Activated CD4-positive, alpha-beta T cell treated with anti-CD3 and anti-CD28 coated beads for 36 hours (primary cell): ENCODE measurements at regions of chr1 and their contacts with region 1.

Region 1: GRCh38 chr1:27603681-27604578 is at the start of gene AHDC1:
- DNase-seq: peak; percentile 96
- ATAC-seq: peak; percentile 77
- H3K4me3 Mint-ChIP-seq: peak within 1 kb of the TSS; percentile 91
- H3K27ac Mint-ChIP-seq: peak within 1 kb of the TSS; percentile 70
- H3K4me1 Mint-ChIP-seq: peaks cover 36% of the 10 kb centered on the region
- H3K27me3 Mint-ChIP-seq: no peaks in the 10 kb centered on the region
- total RNA-seq, gene AHDC1: 10.3 to 12.1 TPM

Region 2: GRCh38 chr1:27321813-27322577 is 281.9 kb before region 1 on chr1 and contains the start of gene TMEM222:
- CTCF ChIA-PET with region 1: interaction called, 4 read pairs
- POLR2A ChIA-PET with region 1: no interaction called
- intact Hi-C with region 1: loop called (anchors 1 to 10 kb)
- DNase-seq: peak; percentile 99
- ATAC-seq: peak; percentile 98
- H3K4me3 Mint-ChIP-seq: peak within 1 kb of the TSS; percentile 94
- H3K27ac Mint-ChIP-seq: peak within 1 kb of the TSS; percentile 90
- H3K4me1 Mint-ChIP-seq: peaks cover 41% of the 10 kb centered on the region
- H3K27me3 Mint-ChIP-seq: no peaks in the 10 kb centered on the region
- total RNA-seq, gene TMEM222: 27.5 to 31.2 TPM

Region 3: GRCh38 chr1:27403065-27403726 is 200.7 kb before region 1 on chr1:
- CTCF ChIA-PET with region 1: interaction called, 5 read pairs
- POLR2A ChIA-PET with region 1: no interaction called
- intact Hi-C with region 1: loop called in 1 of 2 experiments (anchors 1 kb)
- DNase-seq: peak; percentile 66
- ATAC-seq: peak; percentile 69
- H3K4me3 Mint-ChIP-seq: no peak overlapping the region
- H3K27ac Mint-ChIP-seq: peak overlapping the region; percentile 33
- H3K4me1 Mint-ChIP-seq: peaks cover 15% of the 10 kb centered on the region
- H3K27me3 Mint-ChIP-seq: no peaks in the 10 kb centered on the region

Region 4: DNA sequence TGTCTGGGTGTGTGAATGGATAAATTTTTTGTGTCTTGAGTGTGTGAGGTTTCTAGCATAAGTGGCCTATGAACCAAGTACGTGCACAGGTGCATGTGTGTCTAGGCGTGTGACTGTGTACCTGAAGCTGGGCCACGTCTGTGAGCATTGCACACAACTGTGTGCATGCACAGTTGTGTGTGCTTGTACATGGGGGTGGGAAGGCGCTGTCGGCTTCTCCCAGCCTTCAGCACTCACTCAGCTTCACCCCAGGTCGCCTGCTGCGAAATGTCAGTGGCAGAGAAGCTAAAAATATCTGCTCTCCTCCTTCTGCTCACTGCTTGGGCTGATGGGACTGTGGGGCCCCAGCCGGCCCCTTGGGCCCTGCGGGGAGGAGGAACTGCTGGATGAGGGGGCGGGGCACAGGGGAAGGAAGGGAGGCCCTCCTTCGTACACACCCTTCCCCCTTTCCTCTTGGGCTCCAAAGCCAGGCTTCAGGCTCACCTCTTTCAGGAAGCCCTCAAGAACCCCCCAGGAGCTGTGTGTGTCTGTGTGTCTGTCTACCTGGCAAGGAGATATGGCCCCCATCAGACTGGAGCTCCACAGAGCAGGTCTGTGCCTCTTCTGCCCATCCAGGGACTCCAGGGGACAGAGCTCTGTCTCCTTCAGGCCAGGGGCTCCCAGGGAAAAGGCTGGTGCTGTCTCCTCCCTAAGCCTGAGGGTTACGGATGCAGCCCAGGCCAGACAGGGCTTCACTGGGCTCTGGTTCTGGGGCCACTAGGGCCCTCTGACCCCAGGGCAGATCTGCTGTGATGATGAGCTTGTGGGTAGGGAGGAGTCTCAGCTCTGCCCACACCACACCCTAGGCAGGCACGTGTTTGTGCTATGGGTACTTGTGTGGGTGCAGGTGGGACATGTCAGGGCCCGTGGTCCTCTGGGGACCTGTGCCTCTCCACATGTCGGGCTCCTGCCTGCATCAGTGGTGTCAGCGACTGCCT is 78.3 kb before region 1 on chr1:
- CTCF ChIA-PET with region 1: interaction called, 6 read pairs
- POLR2A ChIA-PET with region 1: interaction called, 3 read pairs
- intact Hi-C with region 1: loop called (anchors 1 to 2 kb)
- DNase-seq: peak; percentile 87
- ATAC-seq: peak; percentile 53
- H3K4me3 Mint-ChIP-seq: peak overlapping the region; percentile 63
- H3K27ac Mint-ChIP-seq: peak overlapping the region; percentile 81
- H3K4me1 Mint-ChIP-seq: peaks cover 60% of the 10 kb centered on the region
- H3K27me3 Mint-ChIP-seq: no peaks in the 10 kb centered on the region

Region 5: DNA sequence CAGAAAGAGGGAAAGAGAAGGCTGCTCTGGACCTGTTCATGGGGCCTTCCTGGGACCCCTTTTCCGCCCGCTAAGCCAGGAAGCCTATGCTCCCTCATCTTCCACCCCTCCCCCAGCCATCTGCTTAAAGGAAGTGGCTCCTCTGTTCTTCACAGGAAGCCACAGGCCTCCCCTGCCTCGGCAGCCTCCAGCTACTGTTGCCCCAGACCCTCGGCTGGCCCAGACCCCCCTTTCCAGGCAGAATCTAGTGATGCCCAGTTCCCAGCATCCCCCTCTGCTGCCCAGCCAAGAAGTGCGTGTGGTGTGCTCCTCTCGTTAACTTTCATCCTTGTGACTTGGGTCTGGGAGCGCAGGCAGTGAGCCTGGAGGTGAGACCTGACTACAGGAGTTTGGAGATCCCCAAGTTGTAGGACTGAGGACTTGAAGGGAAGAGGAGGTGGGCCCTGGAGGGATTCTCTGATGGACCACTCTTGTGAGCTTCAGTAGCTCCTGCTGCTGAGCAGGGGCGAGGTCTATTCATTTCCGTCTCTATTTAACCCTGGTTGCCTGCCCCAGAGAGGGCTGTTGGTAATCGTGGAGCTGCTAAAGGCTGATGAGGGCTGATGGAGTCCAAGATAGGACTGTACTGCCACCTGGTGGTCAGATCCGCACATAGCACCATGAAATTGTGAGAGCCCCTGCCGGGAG is 58.9 kb after region 1 on chr1:
- CTCF ChIA-PET with region 1: interaction called, 172 read pairs
- POLR2A ChIA-PET with region 1: interaction called, 7 read pairs
- intact Hi-C with region 1: loop called (anchors 1 kb)
- DNase-seq: peak; percentile 94
- ATAC-seq: peak; percentile 84
- H3K4me3 Mint-ChIP-seq: peak overlapping the region; percentile 70
- H3K27ac Mint-ChIP-seq: peak overlapping the region; percentile 98
- H3K4me1 Mint-ChIP-seq: peaks cover 45% of the 10 kb centered on the region
- H3K27me3 Mint-ChIP-seq: no peaks in the 10 kb centered on the region

Region 6: DNA sequence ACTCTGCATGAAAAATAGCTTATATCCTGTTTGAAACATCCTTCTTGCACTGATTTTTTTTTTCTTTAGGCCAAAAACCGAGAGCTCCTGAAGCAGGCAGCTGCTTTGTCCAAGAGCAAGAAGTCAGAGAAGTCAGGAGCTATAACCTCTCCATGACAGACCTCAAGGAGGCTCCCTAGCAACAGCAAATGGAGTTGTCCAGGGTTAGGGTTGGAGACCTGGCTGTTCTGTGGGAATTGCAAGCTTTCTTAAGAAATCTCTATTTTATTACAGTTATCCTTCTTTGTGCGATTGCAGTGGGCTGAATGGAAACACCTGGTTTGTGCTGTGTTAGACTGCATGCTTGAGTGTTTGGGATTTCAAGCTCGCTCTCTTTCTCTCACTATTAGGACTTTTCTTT is 156.5 kb after region 1 on chr1:
- CTCF ChIA-PET with region 1: no interaction called
- POLR2A ChIA-PET with region 1: no interaction called
- intact Hi-C with region 1: no loop called
- DNase-seq: no peak
- ATAC-seq: no peak
- H3K4me3 Mint-ChIP-seq: no peak overlapping the region
- H3K27ac Mint-ChIP-seq: no peak overlapping the region
- H3K4me1 Mint-ChIP-seq: no peaks in the 10 kb centered on the region
- H3K27me3 Mint-ChIP-seq: no peaks in the 10 kb centered on the region

Region 7: GRCh38 chr1:27830621-27831424 is 226.9 kb after region 1 on chr1 and contains the start of gene PPP1R8:
- CTCF ChIA-PET with region 1: no interaction called
- POLR2A ChIA-PET with region 1: no interaction called
- intact Hi-C with region 1: loop called in 1 of 2 experiments (anchors 1 kb)
- DNase-seq: peak; percentile 94
- ATAC-seq: peak; percentile 99
- H3K4me3 Mint-ChIP-seq: peak within 1 kb of the TSS; percentile 94
- H3K27ac Mint-ChIP-seq: peak within 1 kb of the TSS; percentile 94
- H3K4me1 Mint-ChIP-seq: peaks cover 40% of the 10 kb centered on the region
- H3K27me3 Mint-ChIP-seq: no peaks in the 10 kb centered on the region
- total RNA-seq, gene PPP1R8: 49.6 to 65.9 TPM

Region 8: GRCh38 chr1:27884006-27884954 is 280.4 kb after region 1 on chr1:
- CTCF ChIA-PET with region 1: no interaction called
- POLR2A ChIA-PET with region 1: no interaction called
- intact Hi-C with region 1: no loop called
- DNase-seq: no peak
- ATAC-seq: no peak
- H3K4me3 Mint-ChIP-seq: no peak overlapping the region
- H3K27ac Mint-ChIP-seq: peak overlapping the region; percentile 58
- H3K4me1 Mint-ChIP-seq: peaks cover 39% of the 10 kb centered on the region
- H3K27me3 Mint-ChIP-seq: no peaks in the 10 kb centered on the region

Region 9: GRCh38 chr1:27934818-27935549 is 331.1 kb after region 1 on chr1 and contains the start of gene SMPDL3B:
- CTCF ChIA-PET with region 1: no interaction called
- POLR2A ChIA-PET with region 1: no interaction called
- intact Hi-C with region 1: no loop called
- DNase-seq: no peak
- ATAC-seq: peak; percentile 23
- H3K4me3 Mint-ChIP-seq: peak within 1 kb of the TSS; percentile 11
- H3K27ac Mint-ChIP-seq: no peak within 1 kb of the TSS
- H3K4me1 Mint-ChIP-seq: peaks cover 10% of the 10 kb centered on the region
- H3K27me3 Mint-ChIP-seq: peaks cover 15% of the 10 kb centered on the region
- total RNA-seq, gene SMPDL3B: 0.53 to 0.55 TPM